Upper lobe of right lung (tissue), 1 donor: ENCODE measurements at regions of chr9 and their contacts with region 1.

Region 1: GRCh38 chr9:98263482-98264357 is 8.3 kb upstream of the TBC1D2 start:
- DNase-seq: peak; percentile 87
- ATAC-seq: peak; percentile 100
- H3K4me3 ChIP-seq: no peak overlapping the region
- H3K27ac ChIP-seq: no peak overlapping the region
- H3K4me1 ChIP-seq: no peaks in the 10 kb centered on the region
- H3K27me3 ChIP-seq: no peaks in the 10 kb centered on the region
- CTCF ChIP-seq: peak; percentile 92

Region 2: DNA sequence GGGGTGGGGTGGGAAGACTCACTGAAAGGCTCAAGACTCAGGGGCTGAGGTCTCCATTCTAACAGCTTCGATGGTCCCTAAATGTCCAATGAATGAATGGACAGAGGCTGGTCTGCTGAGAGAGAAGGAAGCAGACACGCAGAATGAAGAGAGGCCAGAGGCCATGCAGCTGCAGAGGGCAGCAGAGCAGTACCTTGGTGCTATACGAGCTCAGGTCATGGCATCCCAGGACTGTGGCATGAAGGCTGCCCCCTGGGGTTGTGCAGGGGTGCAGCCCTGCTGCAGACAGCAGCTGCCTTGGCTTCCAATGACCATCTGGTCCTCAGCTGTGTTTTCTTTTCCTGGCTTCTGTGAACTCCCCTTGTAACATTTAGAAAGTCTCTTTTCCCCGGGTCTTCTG is 56.1 kb before region 1 on chr9:
- intact Hi-C with region 1: loop called (anchors 5 kb)
- DNase-seq: no peak
- ATAC-seq: no peak
- H3K4me3 ChIP-seq: no peak overlapping the region
- H3K27ac ChIP-seq: no peak overlapping the region
- H3K4me1 ChIP-seq: peaks cover 6% of the 10 kb centered on the region
- H3K27me3 ChIP-seq: no peaks in the 10 kb centered on the region
- CTCF ChIP-seq: no peak